CD4-positive, alpha-beta memory T cell (primary cell): ENCODE measurements at regions of chr1 and their contacts with region 1.

Region 1: GRCh38 chr1:111203681-111204200 is 3.3 kb upstream of the DENND2D start:
- DNase-seq: peak; percentile 83 to 91 (median 86)
- H3K4me3 ChIP-seq: peak overlapping the region; percentile 18 to 65
- H3K4me3 Mint-ChIP-seq: peak overlapping the region; percentile 99 to 100 (median 100)
- H3K27ac ChIP-seq: peak overlapping the region; percentile 84
- H3K27ac Mint-ChIP-seq: peak overlapping the region; percentile 94 to 98 (median 98)
- H3K4me1 ChIP-seq: peaks cover 45% of the 10 kb centered on the region
- H3K4me1 Mint-ChIP-seq: peaks cover 46 to 83% (median 57%) of the 10 kb centered on the region in 4 donors
- H3K27me3 ChIP-seq: no peaks in the 10 kb centered on the region
- H3K27me3 Mint-ChIP-seq: no peaks in the 10 kb centered on the region

Region 2: GRCh38 chr1:111139956-111140679 is 63.6 kb before region 1 on chr1 and contains the starts of genes CEPT1 and DRAM2:
- CTCF ChIA-PET with region 1: no interaction called
- POLR2A ChIA-PET with region 1: interaction called, 36 read pairs
- intact Hi-C with region 1: loop called (anchors 5 kb)
- DNase-seq: peak; percentile 89 to 95 (median 91)
- H3K4me3 ChIP-seq: peak within 1 kb of the TSS; percentile 57 to 97
- H3K4me3 Mint-ChIP-seq: peak within 1 kb of the TSS; percentile 98 to 100 (median 100)
- H3K27ac ChIP-seq: peak within 1 kb of the TSS; percentile 79
- H3K27ac Mint-ChIP-seq: peak within 1 kb of the TSS; percentile 84 to 100 (median 99)
- H3K4me1 ChIP-seq: peaks cover 54% of the 10 kb centered on the region
- H3K4me1 Mint-ChIP-seq: peaks cover 32 to 54% (median 41%) of the 10 kb centered on the region in 4 donors
- H3K27me3 ChIP-seq: no peaks in the 10 kb centered on the region
- H3K27me3 Mint-ChIP-seq: no peaks in the 10 kb centered on the region
- total RNA-seq, gene CEPT1: 49.1 to 49.6 TPM
- total RNA-seq, gene DRAM2: 37.5 to 38.8 TPM

Region 3: GRCh38 chr1:111290630-111291029 is 86.9 kb after region 1 on chr1 and contains the start of gene CHIA:
- CTCF ChIA-PET with region 1: no interaction called
- POLR2A ChIA-PET with region 1: no interaction called
- intact Hi-C with region 1: no loop called
- DNase-seq: no peak
- H3K4me3 ChIP-seq: no peak within 1 kb of the TSS
- H3K4me3 Mint-ChIP-seq: no peak within 1 kb of the TSS
- H3K27ac ChIP-seq: no peak within 1 kb of the TSS
- H3K27ac Mint-ChIP-seq: no peak within 1 kb of the TSS
- H3K4me1 ChIP-seq: peaks cover 6% of the 10 kb centered on the region
- H3K4me1 Mint-ChIP-seq: peaks cover 0 to 9% (median 7%) of the 10 kb centered on the region in 4 donors
- H3K27me3 ChIP-seq: no peaks in the 10 kb centered on the region
- H3K27me3 Mint-ChIP-seq: peaks cover 0 to 2% of the 10 kb centered on the region in 2 donors
- total RNA-seq, gene CHIA: not detected